H1 (cell line): ENCODE measurements at regions of chr20 and their contacts with region 1.

Region 1: DNA sequence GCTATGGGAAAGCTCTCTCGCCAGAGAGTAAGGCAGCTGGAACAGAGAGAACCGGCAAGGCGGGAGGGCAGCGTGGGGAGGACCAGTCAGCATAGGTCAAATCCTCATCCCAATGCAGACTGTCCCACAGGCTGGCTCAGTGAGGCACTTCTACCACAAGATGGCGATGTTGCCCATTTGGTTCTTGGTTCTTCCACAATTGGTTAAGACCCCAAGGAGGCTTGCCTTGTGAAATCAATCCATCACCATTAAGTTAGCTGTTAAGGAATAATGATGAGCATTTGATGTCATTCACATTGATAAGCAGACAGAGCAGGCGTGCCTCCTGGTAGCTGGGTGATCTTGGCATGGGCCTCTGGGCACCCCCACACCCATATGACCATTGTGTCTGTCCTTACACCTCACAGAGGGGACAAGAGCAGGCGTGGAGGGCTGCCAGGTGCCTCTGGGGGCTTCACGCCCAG is 2.4 kb downstream of the CSTL1 start:
- DNase-seq: peak; percentile 88 to 93
- H3K4me3 ChIP-seq: no peak overlapping the region
- H3K27ac ChIP-seq: no peak overlapping the region
- H3K4me1 ChIP-seq: no peaks in the 10 kb centered on the region; a peak in 1 of 7 replicates
- H3K27me3 ChIP-seq: no peaks in the 10 kb centered on the region
- CTCF ChIP-seq: peak; percentile 88 to 97 (median 88)
- EP300 ChIP-seq: no peak
- POLR2A ChIP-seq: no peak
- RAD21 ChIP-seq: peak; percentile 96 to 98

Region 2: DNA sequence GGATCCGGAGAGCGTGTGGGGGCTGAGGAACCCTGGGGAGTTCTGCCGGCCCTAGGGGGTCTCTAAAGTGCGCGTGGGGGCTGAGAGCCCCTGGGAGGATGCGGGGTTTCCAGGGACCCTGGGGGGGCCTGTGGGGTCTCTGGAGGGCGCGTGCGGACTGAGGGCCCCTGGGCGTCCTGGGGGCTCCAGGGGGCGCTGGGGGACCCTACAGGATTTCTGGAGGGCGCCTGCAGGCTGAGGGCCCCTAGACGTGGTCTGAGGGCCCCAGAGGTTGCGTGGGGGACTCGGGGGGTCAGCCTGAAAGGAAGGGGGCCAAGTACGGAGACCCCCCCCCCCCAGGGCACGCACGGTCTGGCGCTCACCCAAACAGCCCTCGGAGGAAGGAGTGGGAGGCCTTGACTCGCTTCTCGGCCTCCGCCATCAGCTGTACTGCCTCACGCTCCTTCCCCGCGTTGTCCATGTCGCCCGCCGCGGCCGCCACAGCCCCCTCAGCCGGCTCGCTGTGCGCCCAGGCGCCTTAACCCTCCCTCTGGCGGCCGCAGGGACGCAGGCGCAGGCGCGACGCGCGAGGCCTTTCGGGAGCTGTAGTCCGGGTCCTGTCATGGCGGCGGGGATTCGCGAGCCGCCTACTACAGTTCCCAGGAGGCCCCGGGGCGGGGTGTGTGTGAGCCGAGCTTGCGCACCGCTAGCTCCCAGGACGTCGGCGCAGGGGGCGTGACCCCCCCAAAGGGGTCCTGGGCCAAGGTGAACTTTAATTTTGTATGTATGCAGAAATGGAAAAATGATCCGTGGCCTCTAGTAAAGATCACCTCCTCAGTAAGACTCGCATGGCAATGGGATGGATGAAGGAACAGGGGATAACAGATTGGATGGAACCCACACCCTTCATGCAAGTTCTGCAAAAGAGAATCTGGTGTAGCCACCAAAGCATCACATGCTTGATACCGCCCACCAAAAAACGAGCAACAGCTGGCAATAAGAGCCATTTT is 20.6 kb before region 1 on chr20 and contains the start of gene NAPB:
- CTCF ChIA-PET with region 1: interaction called, 14 read pairs
- POLR2A ChIA-PET with region 1: interaction called, 4 read pairs
- DNase-seq: peak; percentile 73 to 93
- H3K4me3 ChIP-seq: peak within 1 kb of the TSS; percentile 58 to 95 (median 75)
- H3K27ac ChIP-seq: no peak within 1 kb of the TSS
- H3K4me1 ChIP-seq: no peaks in the 10 kb centered on the region
- H3K27me3 ChIP-seq: no peaks in the 10 kb centered on the region
- CTCF ChIP-seq: peak; percentile 40 to 53 (median 42)
- EP300 ChIP-seq: no peak
- POLR2A ChIP-seq: peak in 1 of 2 experiments; percentile 73; a peak in 2 of 3 replicates
- RAD21 ChIP-seq: peak in 1 of 2 experiments; percentile 31; a peak in 2 of 4 replicates
- total RNA-seq, gene NAPB: 12.3 and 12.8 TPM in 2 replicates

Region 3: GRCh38 chr20:23477223-23477622 is 35.3 kb after region 1 on chr20:
- CTCF ChIA-PET with region 1: interaction called, 11 read pairs
- POLR2A ChIA-PET with region 1: interaction called, 3 read pairs
- DNase-seq: no peak
- H3K4me3 ChIP-seq: no peak overlapping the region
- H3K27ac ChIP-seq: no peak overlapping the region
- H3K4me1 ChIP-seq: peaks cover 0 to 14% (median 7%) of the 10 kb centered on the region in 4 experiments; a peak in 4 of 7 replicates
- H3K27me3 ChIP-seq: peaks cover 0 to 8% (median 3%) of the 10 kb centered on the region in 4 experiments; a peak in 1 of 7 replicates
- CTCF ChIP-seq: no peak
- EP300 ChIP-seq: no peak
- POLR2A ChIP-seq: no peak
- RAD21 ChIP-seq: no peak

Region 4: DNA sequence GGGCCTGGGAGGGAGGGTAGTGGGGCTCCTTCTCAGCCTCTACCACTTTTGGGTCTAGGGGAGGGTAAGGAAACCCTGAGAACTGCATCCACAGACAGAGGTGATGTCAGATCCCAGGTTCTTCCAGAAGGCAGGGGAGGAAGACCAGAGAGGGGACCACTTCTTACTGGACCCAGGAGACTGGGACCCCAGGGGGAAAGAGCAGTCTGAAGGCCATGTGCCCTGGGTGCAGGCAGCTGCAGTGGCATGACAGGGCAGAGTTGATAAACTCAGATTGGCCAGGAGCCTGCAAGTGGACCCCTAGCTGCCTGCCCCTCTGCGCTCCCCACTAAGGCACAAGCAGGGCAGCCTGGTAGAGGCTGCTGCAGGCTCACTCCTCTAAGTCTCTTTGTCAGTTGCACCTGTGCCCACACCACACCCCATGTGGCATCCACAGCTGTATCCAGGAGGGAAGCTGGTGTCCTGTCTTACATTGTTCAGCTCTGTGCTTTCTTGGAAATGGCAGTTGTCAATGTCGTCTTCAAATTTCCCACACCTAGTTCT is 123.7 kb after region 1 on chr20:
- CTCF ChIA-PET with region 1: interaction called, 20 read pairs
- POLR2A ChIA-PET with region 1: no interaction called
- DNase-seq: no peak
- H3K4me3 ChIP-seq: no peak overlapping the region
- H3K27ac ChIP-seq: no peak overlapping the region
- H3K4me1 ChIP-seq: no peaks in the 10 kb centered on the region; a peak in 1 of 7 replicates
- H3K27me3 ChIP-seq: no peaks in the 10 kb centered on the region
- CTCF ChIP-seq: no peak
- EP300 ChIP-seq: no peak
- POLR2A ChIP-seq: no peak
- RAD21 ChIP-seq: no peak

Region 5: GRCh38 chr20:23606652-23607049 is 164.8 kb after region 1 on chr20:
- CTCF ChIA-PET with region 1: interaction called, 328 read pairs
- POLR2A ChIA-PET with region 1: no interaction called
- DNase-seq: peak; percentile 73 to 95
- H3K4me3 ChIP-seq: no peak overlapping the region
- H3K27ac ChIP-seq: no peak overlapping the region
- H3K4me1 ChIP-seq: peaks cover 0 to 7% (median 2%) of the 10 kb centered on the region in 4 experiments; a peak in 3 of 7 replicates
- H3K27me3 ChIP-seq: no peaks in the 10 kb centered on the region; a peak in 1 of 7 replicates
- CTCF ChIP-seq: peak; percentile 86 to 99 (median 96)
- EP300 ChIP-seq: no peak
- POLR2A ChIP-seq: no peak
- RAD21 ChIP-seq: peak; percentile 95 to 98